Activated CD4-positive, alpha-beta memory T cell treated with anti-CD3 and anti-CD28 coated beads for 36 hours (primary cell): ENCODE measurements at regions of chr9 and their contacts with region 1.

Region 1: DNA sequence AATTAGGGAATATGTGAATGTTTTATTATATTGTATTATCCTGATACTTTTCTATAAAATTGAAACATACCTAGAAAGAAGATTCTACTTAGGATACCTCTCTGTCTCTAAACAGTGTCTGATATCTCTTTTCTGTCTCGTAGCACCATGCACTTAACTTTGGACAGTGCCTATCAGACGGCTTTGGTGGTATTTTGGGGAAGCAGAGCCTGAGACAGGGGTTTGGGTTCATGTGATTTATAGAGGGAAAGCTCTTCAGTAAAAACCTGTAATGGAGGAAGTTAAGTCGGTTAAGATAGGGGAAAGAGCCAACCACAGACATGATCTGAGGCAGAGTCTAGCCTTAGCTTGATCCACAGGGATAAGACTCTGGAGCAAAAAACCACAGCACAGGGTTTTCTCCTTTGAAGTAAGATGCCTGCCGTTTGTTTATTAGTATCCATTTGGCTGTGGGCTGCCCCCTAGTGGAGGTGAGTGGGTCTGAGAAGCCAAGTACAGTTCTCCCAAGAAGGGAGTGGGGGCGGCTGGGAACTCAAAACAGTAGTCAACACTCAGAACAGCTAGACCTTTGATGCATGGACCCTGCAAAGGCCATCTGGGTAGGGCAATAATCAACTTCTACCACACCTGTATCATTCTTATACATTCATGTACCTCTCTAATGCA is 141.2 kb upstream of the ASTN2 start:
- DNase-seq: peak; percentile 52
- H3K4me3 Mint-ChIP-seq: no peak overlapping the region
- H3K27ac Mint-ChIP-seq: no peak overlapping the region
- H3K4me1 Mint-ChIP-seq: no peaks in the 10 kb centered on the region
- H3K27me3 Mint-ChIP-seq: no peaks in the 10 kb centered on the region

Region 2: GRCh38 chr9:117487555-117488175 is 68.4 kb before region 1 on chr9:
- CTCF ChIA-PET with region 1: no interaction called
- POLR2A ChIA-PET with region 1: no interaction called
- intact Hi-C with region 1: loop called (anchors 5 kb)
- DNase-seq: peak; percentile 46
- H3K4me3 Mint-ChIP-seq: no peak overlapping the region
- H3K27ac Mint-ChIP-seq: no peak overlapping the region
- H3K4me1 Mint-ChIP-seq: no peaks in the 10 kb centered on the region
- H3K27me3 Mint-ChIP-seq: no peaks in the 10 kb centered on the region

Region 3: DNA sequence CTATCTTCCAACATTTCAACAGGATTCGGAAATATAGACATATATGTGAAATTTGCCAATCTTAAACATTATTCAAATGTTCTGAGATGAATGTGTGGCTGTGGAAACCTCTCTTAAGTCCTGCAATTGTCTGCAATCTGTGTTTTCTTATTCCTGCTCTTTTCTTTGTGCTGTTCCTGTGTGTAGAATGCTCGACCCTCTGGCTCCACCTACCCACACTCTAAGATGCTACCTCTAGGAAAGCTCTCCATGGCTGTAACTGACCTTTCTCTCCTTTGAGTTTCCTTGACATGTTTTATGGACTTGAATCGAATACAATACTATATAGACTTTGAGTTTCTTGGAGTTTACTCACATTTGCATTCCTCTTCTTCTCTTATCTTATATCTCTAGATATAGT is 20.7 kb before region 1 on chr9:
- CTCF ChIA-PET with region 1: no interaction called
- POLR2A ChIA-PET with region 1: no interaction called
- intact Hi-C with region 1: no loop called
- DNase-seq: no peak
- H3K4me3 Mint-ChIP-seq: no peak overlapping the region
- H3K27ac Mint-ChIP-seq: no peak overlapping the region
- H3K4me1 Mint-ChIP-seq: no peaks in the 10 kb centered on the region
- H3K27me3 Mint-ChIP-seq: no peaks in the 10 kb centered on the region